ENCODE measurements at regions of chr20 and their contacts with region 1.

Region 1: GRCh38 chr20:53547664-53548239 is 45.9 kb downstream of the ZNF217 start:
- DNase-seq: no peak

Region 2: DNA sequence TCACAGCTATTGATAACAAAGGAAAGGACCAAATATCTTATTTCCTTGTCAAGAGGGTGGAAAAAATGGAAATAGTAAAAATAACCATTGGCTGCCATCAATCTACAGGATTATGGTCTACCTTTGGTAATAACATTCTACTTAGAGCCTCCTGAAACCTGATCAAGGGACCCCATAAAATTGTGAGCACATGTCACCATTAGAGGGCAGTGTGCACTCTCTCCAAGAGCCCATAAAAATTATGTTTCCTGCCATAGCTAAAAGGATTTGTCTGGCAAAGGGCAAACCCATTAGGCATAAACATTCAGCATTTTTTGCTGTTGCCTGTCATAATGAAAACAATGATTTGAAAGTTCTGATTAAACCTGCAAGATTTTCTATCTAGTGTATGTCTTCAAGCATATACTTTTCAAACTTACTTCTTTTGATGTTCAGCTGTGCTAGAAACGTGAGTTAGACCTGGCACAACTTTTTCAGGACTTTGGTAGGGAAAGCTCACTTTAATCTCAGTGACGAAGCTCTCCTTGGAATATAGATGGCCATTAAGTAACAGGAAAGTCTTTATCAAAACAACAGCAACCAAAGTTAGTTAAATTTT is 1235.5 kb before region 1 on chr20:
- intact Hi-C with region 1: loop called (anchors 5 kb)
- DNase-seq: no peak

Measured in cardiac septum (tissue), 1 donor.